HepG2 (cell line): ENCODE measurements at regions of chr13 and their contacts with region 1.

Region 1: GRCh38 chr13:113122550-113123225 is at the start of gene F10:
- DNase-seq: peak; percentile 95
- ATAC-seq: peak; percentile 93
- H3K4me3 ChIP-seq: peak within 1 kb of the TSS; percentile 70 to 92 (median 76)
- H3K27ac ChIP-seq: peak within 1 kb of the TSS; percentile 83
- H3K4me1 ChIP-seq: peaks cover 43% of the 10 kb centered on the region
- H3K27me3 ChIP-seq: no peaks in the 10 kb centered on the region; a peak in 1 of 5 replicates
- CTCF ChIP-seq: peak; percentile 34; the same call in 1 of the 2 replicates
- EP300 ChIP-seq: peak in 1 of 2 experiments; percentile 47; a peak in 2 of 4 replicates
- POLR2A ChIP-seq: peak in 1 of 2 experiments; percentile 92; a peak in 2 of 4 replicates
- RAD21 ChIP-seq: peak; percentile 62
- total RNA-seq, gene F10: 19.9 and 58.4 TPM in 2 replicates

Region 2: GRCh38 chr13:112161521-112162301 is 961.0 kb before region 1 on chr13:
- CTCF ChIA-PET with region 1: no interaction called
- POLR2A ChIA-PET with region 1: no interaction called
- in situ Hi-C with region 1: no loop called
- intact Hi-C with region 1: no loop called
- DNase-seq: no peak
- ATAC-seq: peak; percentile 49
- H3K4me3 ChIP-seq: peak overlapping the region in 1 of 3 experiments; percentile 29; a peak in 1 of 6 replicates
- H3K27ac ChIP-seq: no peak overlapping the region
- H3K4me1 ChIP-seq: peaks cover 38% of the 10 kb centered on the region
- H3K27me3 ChIP-seq: peaks cover 0 to 13% of the 10 kb centered on the region in 2 experiments; a peak in 3 of 5 replicates
- CTCF ChIP-seq: no peak
- EP300 ChIP-seq: no peak
- POLR2A ChIP-seq: no peak
- RAD21 ChIP-seq: no peak

Region 3: GRCh38 chr13:112942689-112943308 is 179.9 kb before region 1 on chr13:
- CTCF ChIA-PET with region 1: no interaction called
- POLR2A ChIA-PET with region 1: interaction called, 3 read pairs
- in situ Hi-C with region 1: no loop called
- intact Hi-C with region 1: loop called (anchors 5 kb)
- DNase-seq: peak; percentile 94
- ATAC-seq: peak; percentile 92
- H3K4me3 ChIP-seq: peak overlapping the region; percentile 42 to 72 (median 67)
- H3K27ac ChIP-seq: no peak overlapping the region
- H3K4me1 ChIP-seq: peaks cover 30% of the 10 kb centered on the region
- H3K27me3 ChIP-seq: no peaks in the 10 kb centered on the region; a peak in 1 of 5 replicates
- CTCF ChIP-seq: peak; percentile 99
- EP300 ChIP-seq: no peak
- POLR2A ChIP-seq: no peak; a peak in 1 of 4 replicates
- RAD21 ChIP-seq: peak; percentile 95

Region 4: DNA sequence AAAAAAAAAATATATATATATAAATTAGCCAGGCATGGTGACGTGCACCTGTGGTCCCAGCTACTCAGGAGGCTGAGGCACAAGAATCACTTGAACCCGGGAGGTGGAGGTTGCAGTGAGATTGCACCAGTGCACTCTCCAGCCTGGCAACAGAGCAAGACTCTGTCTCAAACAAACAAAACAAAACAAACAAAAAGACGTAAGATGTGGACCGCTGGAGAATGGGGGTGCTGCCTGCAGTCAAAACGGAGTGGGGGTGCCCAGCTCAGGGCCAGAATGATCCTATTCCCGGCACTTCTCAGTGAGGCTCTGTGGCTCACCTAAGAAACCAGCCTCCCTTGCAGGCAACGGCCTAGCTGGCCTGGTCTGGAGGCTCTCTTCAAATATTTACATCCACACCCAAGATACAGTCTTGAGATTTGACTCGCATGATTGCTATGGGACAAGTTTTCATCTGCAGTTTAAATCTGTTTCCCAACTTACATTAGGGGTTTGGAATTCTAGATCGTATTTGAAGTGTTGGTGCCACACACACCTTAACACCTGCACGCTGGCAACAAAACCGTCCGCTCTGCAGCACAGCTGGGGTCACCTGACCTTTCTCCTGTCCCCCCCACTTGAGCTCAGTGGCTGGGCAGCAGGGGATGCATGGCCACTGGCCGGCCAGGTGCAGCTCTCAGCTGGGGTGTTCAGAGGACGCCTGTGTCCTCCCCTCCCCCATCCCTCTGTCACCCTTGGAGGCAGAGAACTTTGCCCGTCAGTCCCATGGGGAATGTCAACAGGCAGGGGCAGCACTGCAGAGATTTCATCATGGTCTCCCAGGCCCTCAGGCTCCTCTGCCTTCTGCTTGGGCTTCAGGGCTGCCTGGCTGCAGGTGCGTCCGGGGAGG is 17.4 kb before region 1 on chr13 and contains the start of gene F7:
- CTCF ChIA-PET with region 1: no interaction called
- POLR2A ChIA-PET with region 1: interaction called, 71 read pairs
- in situ Hi-C with region 1: no loop called
- intact Hi-C with region 1: loop called (anchors 2 kb)
- DNase-seq: peak; percentile 91
- ATAC-seq: peak; percentile 88
- H3K4me3 ChIP-seq: peak within 1 kb of the TSS; percentile 60 to 76 (median 75)
- H3K27ac ChIP-seq: peak within 1 kb of the TSS; percentile 98
- H3K4me1 ChIP-seq: peaks cover 39% of the 10 kb centered on the region
- H3K27me3 ChIP-seq: no peaks in the 10 kb centered on the region
- CTCF ChIP-seq: peak; percentile 43
- EP300 ChIP-seq: peak; percentile 85; a peak in 3 of 4 replicates
- POLR2A ChIP-seq: peak; percentile 74 to 79
- RAD21 ChIP-seq: peak; percentile 54; the same call in 1 of the 2 replicates
- total RNA-seq, gene F7: 7.2 and 12.6 TPM in 2 replicates

Region 5: DNA sequence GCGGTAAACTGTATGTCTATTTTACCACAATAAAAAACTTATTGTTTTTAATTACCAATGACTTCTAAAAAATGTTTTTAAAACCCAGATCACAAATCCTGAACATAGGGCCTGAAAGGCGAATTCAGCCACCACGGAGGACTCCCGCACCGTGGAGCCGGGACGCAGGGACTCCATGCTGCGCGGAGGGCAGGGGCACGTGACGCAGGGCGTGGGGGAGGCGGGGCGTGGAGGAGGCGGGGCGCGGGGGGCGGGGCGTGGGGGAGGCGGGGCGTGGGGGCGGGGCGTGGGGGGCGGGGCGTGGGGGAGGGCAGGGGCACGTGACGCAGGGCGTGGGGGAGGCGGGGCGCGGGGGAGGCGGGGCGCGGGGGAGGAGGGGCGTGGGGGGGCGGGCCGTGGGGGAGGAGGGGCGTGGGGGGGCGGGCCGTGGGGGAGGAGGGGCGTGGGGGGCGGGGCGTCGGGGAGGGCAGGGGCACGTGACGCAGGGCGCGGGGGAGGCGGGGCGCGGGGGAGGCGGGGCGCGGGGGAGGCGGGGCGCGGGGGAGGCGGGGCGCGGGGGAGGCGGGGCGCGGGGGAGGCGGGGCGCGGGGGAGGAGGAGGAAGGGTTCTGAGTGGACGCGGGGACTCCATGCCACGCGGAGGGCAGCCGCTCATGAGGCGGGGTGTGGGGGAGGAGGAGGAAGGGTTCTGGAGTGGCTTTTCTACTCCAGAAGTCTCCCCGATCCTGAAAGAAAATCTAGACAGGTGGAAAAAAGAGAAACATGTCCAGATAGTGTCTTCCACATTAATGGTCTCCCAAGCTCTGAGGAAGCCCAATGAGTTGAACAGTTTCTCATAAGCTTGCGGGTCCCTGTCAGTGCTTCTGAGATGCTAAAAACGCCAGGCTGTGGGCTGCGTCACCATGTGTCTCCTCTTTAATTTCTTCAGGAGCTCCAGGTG is 31.4 kb after region 1 on chr13:
- CTCF ChIA-PET with region 1: no interaction called
- POLR2A ChIA-PET with region 1: interaction called, 33 read pairs
- in situ Hi-C with region 1: no loop called
- intact Hi-C with region 1: loop called (anchors 1 kb)
- DNase-seq: peak; percentile 49
- ATAC-seq: peak; percentile 30; the same call in 2 of the 3 replicates
- H3K4me3 ChIP-seq: peak overlapping the region; percentile 69 to 81 (median 76)
- H3K27ac ChIP-seq: peak overlapping the region; percentile 92
- H3K4me1 ChIP-seq: peaks cover 92% of the 10 kb centered on the region
- H3K27me3 ChIP-seq: no peaks in the 10 kb centered on the region
- CTCF ChIP-seq: no peak
- EP300 ChIP-seq: no peak
- POLR2A ChIP-seq: peak in 1 of 2 experiments; percentile 88; a peak in 2 of 4 replicates
- RAD21 ChIP-seq: no peak

Region 6: DNA sequence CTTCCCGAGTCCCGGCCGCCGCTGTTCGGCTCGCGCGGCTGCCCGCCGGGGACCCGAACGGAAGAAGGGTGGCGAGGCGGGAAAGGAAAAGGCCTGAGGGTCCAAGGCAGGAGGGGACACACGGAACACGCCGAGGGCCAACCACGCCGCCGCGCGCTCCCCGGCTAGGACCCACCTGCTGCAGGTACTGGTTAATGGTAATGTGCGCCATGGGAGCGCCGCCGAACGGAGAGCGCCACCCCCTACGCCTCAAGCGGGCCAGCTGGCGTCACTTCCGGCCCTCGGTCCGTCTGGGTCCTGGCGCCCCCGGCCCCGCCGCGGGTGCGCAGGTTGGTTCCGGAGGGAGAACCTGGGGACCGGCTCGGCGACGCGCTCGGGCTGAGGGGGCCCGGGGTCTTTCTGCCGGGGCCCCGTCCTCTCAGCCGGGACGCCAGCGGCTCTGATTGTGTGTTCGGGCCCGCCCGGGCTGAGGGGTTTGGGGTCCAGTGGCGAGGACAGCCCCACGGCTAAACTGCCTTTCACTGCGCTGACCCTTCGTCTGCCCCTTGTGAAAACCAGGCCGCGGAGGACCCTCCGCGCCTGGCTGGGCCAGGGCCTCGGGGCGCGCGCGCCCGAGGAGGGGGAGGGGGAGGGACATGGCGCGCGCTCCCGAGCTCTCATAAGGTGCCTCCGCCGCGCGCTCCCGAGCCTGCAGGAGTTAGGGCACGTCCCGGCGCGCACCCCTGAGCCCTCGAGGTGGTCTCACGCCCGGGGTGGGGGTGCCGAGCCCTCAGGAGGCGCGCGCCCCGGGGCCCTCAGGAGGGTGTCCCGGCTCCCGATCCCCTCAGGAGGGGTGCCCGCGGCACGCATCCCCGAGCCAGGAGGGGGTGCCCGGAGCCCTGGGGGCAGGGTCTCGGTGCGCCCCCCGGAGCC is 86.0 kb after region 1 on chr13 and contains the start of gene PCID2:
- CTCF ChIA-PET with region 1: no interaction called
- POLR2A ChIA-PET with region 1: interaction called, 25 read pairs
- in situ Hi-C with region 1: no loop called
- intact Hi-C with region 1: loop called (anchors 2 kb)
- DNase-seq: peak; percentile 82
- ATAC-seq: peak; percentile 86
- H3K4me3 ChIP-seq: peak within 1 kb of the TSS; percentile 83 to 96 (median 85)
- H3K27ac ChIP-seq: peak within 1 kb of the TSS; percentile 92
- H3K4me1 ChIP-seq: peaks cover 71% of the 10 kb centered on the region
- H3K27me3 ChIP-seq: no peaks in the 10 kb centered on the region
- CTCF ChIP-seq: peak; percentile 52
- EP300 ChIP-seq: peak; percentile 29 to 59; a peak in 1 of 4 replicates
- POLR2A ChIP-seq: peak in 1 of 2 experiments; percentile 83; a peak in 2 of 4 replicates
- RAD21 ChIP-seq: peak; percentile 54; the same call in 1 of the 2 replicates
- total RNA-seq, gene PCID2: 65.0 and 76.4 TPM in 2 replicates